ENCODE measurements at regions of chr2 and their contacts with region 1.

Region 1: GRCh38 chr2:172972005-172972619 is 103.5 kb upstream of the MAP3K20 start:
- DNase-seq: peak; percentile 60
- ATAC-seq: peak; percentile 58
- H3K4me3 ChIP-seq: no peak overlapping the region
- H3K27ac ChIP-seq: no peak overlapping the region
- H3K4me1 ChIP-seq: peaks cover 34% of the 10 kb centered on the region
- H3K27me3 ChIP-seq: no peaks in the 10 kb centered on the region
- CTCF ChIP-seq: peak; percentile 91

Region 2: GRCh38 chr2:172953970-172954852 is 17.9 kb before region 1 on chr2:
- CTCF ChIA-PET with region 1: no interaction called
- POLR2A ChIA-PET with region 1: no interaction called
- intact Hi-C with region 1: no loop called
- DNase-seq: peak; percentile 84
- ATAC-seq: peak; percentile 43
- H3K4me3 ChIP-seq: no peak overlapping the region; the same call in 1 of the 2 replicates
- H3K27ac ChIP-seq: peak overlapping the region; percentile 47
- H3K4me1 ChIP-seq: peaks cover 18% of the 10 kb centered on the region
- H3K27me3 ChIP-seq: no peaks in the 10 kb centered on the region
- CTCF ChIP-seq: no peak

Region 3: DNA sequence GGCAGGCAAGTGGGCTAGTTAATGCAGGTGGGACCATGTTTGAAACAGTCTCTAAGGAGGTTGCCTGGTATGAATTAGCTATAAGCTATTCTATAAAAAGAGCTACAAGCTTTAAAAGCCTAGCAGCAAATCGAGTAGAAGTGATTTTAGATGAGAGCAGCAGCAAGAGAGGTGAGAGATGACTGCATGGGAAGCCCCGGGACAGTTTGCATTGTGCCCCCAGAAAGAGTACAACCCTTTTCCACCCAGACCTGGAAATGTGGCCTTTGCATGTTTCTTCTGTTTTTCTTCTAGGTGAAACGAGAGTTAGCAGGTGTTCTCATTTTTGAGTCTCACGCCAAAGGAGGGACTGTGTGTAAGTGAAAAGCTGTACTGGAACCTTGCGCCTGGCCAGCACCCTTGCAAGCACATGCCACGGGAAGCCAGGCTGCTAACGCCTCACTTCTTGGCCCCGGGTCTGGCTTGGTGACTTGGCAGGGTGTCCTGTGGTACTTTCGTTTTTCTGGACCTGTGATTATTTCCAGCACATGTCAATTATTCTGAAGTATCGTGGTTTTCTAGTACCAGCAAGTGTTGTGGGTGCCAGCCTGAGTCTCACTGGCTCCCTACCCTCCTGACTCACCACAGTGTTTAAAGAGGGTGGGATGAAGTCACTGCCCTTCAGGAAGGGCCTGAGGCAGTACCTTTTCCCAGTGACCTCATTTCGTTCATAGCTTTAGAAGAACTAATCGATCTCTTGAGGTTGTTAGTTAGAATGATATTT is 13.2 kb after region 1 on chr2:
- CTCF ChIA-PET with region 1: no interaction called
- POLR2A ChIA-PET with region 1: no interaction called
- intact Hi-C with region 1: loop called (anchors 1 kb)
- DNase-seq: peak; percentile 96
- ATAC-seq: peak; percentile 99
- H3K4me3 ChIP-seq: peak overlapping the region; percentile 58
- H3K27ac ChIP-seq: peak overlapping the region; percentile 91
- H3K4me1 ChIP-seq: peaks cover 19% of the 10 kb centered on the region
- H3K27me3 ChIP-seq: no peaks in the 10 kb centered on the region
- CTCF ChIP-seq: no peak